ENCODE measurements at regions of chr12 and their contacts with region 1.

Region 1: DNA sequence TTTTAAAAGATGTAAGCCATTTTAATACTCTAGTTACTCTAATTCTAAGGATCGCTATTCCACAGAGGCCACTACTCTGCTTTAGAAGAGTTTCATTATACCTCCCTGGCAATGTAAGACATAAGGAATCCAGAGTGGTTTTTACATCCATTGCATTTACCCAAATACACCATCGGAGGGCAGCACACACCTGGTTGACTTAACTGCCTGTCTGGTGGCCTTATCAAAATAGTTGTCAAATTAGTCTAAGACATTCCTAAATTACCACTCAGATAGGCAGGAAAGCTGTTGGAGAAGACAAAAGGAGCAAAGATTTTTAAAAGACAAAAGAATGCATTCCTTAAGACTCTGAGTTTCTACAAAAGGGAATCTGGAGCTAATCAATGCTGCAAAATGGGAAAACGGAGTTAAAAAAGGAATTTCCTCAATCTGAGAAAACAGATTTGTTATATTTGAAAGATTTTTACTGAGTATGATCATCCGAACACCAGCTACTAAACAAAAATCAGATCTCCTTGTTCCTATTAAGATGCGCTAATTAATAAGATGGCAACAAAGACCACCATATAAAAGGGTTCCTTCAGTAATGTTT is 33.8 kb upstream of the FGD4 start:
- DNase-seq: peak; percentile 70 to 72
- H3K4me3 ChIP-seq: no peak overlapping the region
- H3K27ac ChIP-seq: no peak overlapping the region
- H3K4me1 ChIP-seq: no peaks in the 10 kb centered on the region
- H3K27me3 ChIP-seq: no peaks in the 10 kb centered on the region
- CTCF ChIP-seq: peak; percentile 94

Region 2: GRCh38 chr12:32437095-32437515 is 71.5 kb after region 1 on chr12:
- CTCF ChIA-PET with region 1: no interaction called
- POLR2A ChIA-PET with region 1: no interaction called
- intact Hi-C with region 1: loop called (anchors 2 kb)
- DNase-seq: peak; percentile 76 to 97
- H3K4me3 ChIP-seq: peak overlapping the region; percentile 28; the same call in 1 of the 2 replicates
- H3K27ac ChIP-seq: peak overlapping the region; percentile 81
- H3K4me1 ChIP-seq: peaks cover 41% of the 10 kb centered on the region
- H3K27me3 ChIP-seq: no peaks in the 10 kb centered on the region
- CTCF ChIP-seq: no peak

Region 3: GRCh38 chr12:32605034-32605719 is 239.6 kb after region 1 on chr12:
- CTCF ChIA-PET with region 1: interaction called, 11 read pairs
- POLR2A ChIA-PET with region 1: no interaction called
- intact Hi-C with region 1: no loop called
- DNase-seq: peak; percentile 33 to 73
- H3K4me3 ChIP-seq: no peak overlapping the region
- H3K27ac ChIP-seq: peak overlapping the region; percentile 43
- H3K4me1 ChIP-seq: peaks cover 18% of the 10 kb centered on the region
- H3K27me3 ChIP-seq: no peaks in the 10 kb centered on the region
- CTCF ChIP-seq: no peak

Region 4: GRCh38 chr12:32671930-32672780 is 306.6 kb after region 1 on chr12:
- CTCF ChIA-PET with region 1: interaction called, 4 read pairs
- POLR2A ChIA-PET with region 1: no interaction called
- intact Hi-C with region 1: loop called (anchors 1 kb)
- DNase-seq: peak in 1 of 2 experiments; percentile 21
- H3K4me3 ChIP-seq: no peak overlapping the region
- H3K27ac ChIP-seq: no peak overlapping the region
- H3K4me1 ChIP-seq: no peaks in the 10 kb centered on the region
- H3K27me3 ChIP-seq: no peaks in the 10 kb centered on the region
- CTCF ChIP-seq: peak; percentile 68

Region 5: DNA sequence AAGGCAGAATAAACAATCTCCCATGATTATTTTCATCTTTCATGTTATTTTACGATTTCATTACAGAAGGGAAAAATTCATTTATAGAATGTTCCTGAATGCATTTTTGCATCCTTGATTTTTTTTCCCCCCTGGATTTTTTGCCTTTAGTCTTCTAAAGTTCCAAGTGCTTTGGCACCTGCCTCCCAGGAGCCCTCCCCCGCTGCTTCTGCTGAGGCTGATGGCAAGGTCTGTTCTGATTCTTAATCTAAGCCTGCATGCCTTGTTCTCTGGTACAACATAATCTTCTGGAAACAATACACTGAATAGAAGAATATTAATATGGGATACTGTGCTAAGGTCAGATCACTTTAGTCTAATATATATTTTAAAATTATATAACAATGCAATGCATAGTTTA is 372.1 kb after region 1 on chr12:
- CTCF ChIA-PET with region 1: no interaction called
- POLR2A ChIA-PET with region 1: no interaction called
- intact Hi-C with region 1: loop called (anchors 5 kb)
- DNase-seq: no peak
- H3K4me3 ChIP-seq: no peak overlapping the region
- H3K27ac ChIP-seq: no peak overlapping the region
- H3K4me1 ChIP-seq: no peaks in the 10 kb centered on the region
- H3K27me3 ChIP-seq: no peaks in the 10 kb centered on the region
- CTCF ChIP-seq: no peak